ENCODE measurements at regions of chr7 and their contacts with region 1.

Region 1: DNA sequence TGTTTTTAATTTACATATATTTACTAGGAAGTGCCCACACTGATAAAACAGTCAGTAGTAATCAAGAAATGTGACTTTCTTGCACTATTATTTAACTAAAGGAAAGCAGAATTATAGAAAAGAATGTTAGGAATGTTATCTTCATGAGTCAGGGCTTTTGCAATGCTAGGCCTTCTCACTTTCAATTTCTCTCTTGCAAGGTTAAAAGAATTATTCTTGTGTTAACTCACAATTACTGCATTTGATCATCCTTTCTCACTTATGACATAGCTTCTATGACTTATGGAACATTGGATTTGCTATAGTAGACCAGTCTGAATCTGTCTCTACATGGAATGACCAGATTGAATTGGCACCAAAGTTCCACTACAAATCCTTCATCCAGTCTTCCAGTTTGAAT is 192.4 kb downstream of the SDK1 start:
- DNase-seq: no peak
- ATAC-seq: no peak
- H3K4me3 ChIP-seq: no peak overlapping the region
- H3K27ac ChIP-seq: no peak overlapping the region
- H3K4me1 ChIP-seq: peaks cover 0 to 4% (median 0%) of the 10 kb centered on the region in 9 donors
- H3K27me3 ChIP-seq: no peaks in the 10 kb centered on the region
- CTCF ChIP-seq: no peak

Region 2: DNA sequence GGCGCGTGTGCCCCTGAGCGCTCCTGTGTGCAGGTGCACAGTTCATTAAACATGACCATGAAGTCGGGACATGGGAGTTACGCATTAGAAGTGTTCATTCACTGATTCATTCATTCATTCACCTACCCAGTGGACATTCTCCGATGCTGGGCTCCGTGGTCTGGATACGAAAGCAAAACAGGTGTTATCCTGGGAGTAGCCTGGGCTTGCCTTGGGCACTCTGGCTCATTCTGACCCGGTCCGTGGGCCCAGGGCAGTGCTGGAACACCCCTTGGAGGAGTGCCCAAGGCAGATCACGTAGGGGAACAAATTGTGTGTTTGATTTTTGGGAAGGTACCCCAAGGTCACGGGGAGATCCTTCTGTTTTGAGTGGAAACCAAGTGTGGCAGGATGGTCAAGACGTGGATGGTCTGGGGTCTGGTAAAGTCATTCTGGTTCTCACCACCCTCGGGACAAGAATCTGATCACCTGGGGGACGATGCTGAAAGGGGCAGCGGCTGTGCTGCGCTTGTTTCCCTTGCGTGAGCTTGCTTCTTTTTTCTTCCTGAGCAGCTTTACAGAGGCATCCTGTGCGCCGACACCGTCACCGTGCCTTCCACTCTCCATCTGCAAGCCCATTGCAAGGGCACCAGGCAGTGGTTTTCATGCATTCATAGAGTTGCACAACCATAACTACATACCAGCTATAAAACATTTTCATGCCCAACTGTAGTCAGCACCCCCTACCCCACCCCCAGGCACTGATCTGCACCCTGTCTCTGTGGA is 1813.4 kb before region 1 on chr7:
- intact Hi-C with region 1: loop called in 1 of 10 experiments (anchors 5 kb)
- DNase-seq: no peak
- ATAC-seq: no peak
- H3K4me3 ChIP-seq: no peak overlapping the region
- H3K27ac ChIP-seq: no peak overlapping the region
- H3K4me1 ChIP-seq: no peaks in the 10 kb centered on the region
- H3K27me3 ChIP-seq: peaks cover 0 to 8% (median 0%) of the 10 kb centered on the region in 7 donors
- CTCF ChIP-seq: no peak

Measured in heart right ventricle (tissue), 16 donors.